Prostate gland (tissue), 2 donors: ENCODE measurements at regions of chr2 and their contacts with region 1.

Region 1: GRCh38 chr2:179513181-179513580 is 248.5 kb upstream of the SESTD1 start:
- DNase-seq: no peak
- H3K4me3 ChIP-seq: no peak overlapping the region
- H3K27ac ChIP-seq: no peak overlapping the region
- H3K4me1 ChIP-seq: no peaks in the 10 kb centered on the region
- H3K27me3 ChIP-seq: no peaks in the 10 kb centered on the region
- CTCF ChIP-seq: no peak
- POLR2A ChIP-seq: no peak

Region 2: GRCh38 chr2:179479947-179480346 is 33.2 kb before region 1 on chr2:
- intact Hi-C with region 1: loop called (anchors 2 kb)
- DNase-seq: no peak
- H3K4me3 ChIP-seq: no peak overlapping the region
- H3K27ac ChIP-seq: no peak overlapping the region
- H3K4me1 ChIP-seq: no peaks in the 10 kb centered on the region
- H3K27me3 ChIP-seq: no peaks in the 10 kb centered on the region
- CTCF ChIP-seq: no peak
- POLR2A ChIP-seq: no peak